Activated CD4-positive, alpha-beta memory T cell treated with anti-CD3 and anti-CD28 coated beads, Interleukin-2, amount 10 ng/mL, durations not matched to agents 7 days and 5 days (primary cell): ENCODE measurements at regions of chrX and their contacts with region 1.

Region 1: GRCh38 chrX:155056877-155057792 is 13.8 kb downstream of the CMC4 start:
- DNase-seq: peak; percentile 57
- H3K4me3 Mint-ChIP-seq: peak overlapping the region; percentile 59
- H3K27ac Mint-ChIP-seq: peak overlapping the region; percentile 67
- H3K4me1 Mint-ChIP-seq: peaks cover 35% of the 10 kb centered on the region
- H3K27me3 Mint-ChIP-seq: no peaks in the 10 kb centered on the region

Region 2: GRCh38 chrX:154918060-154918483 is 139.1 kb before region 1 on chrX:
- CTCF ChIA-PET with region 1: interaction called, 16 read pairs
- POLR2A ChIA-PET with region 1: no interaction called
- DNase-seq: peak; percentile 20
- H3K4me3 Mint-ChIP-seq: peak overlapping the region; percentile 25
- H3K27ac Mint-ChIP-seq: no peak overlapping the region
- H3K4me1 Mint-ChIP-seq: peaks cover 1% of the 10 kb centered on the region
- H3K27me3 Mint-ChIP-seq: peaks cover 14% of the 10 kb centered on the region

Region 3: DNA sequence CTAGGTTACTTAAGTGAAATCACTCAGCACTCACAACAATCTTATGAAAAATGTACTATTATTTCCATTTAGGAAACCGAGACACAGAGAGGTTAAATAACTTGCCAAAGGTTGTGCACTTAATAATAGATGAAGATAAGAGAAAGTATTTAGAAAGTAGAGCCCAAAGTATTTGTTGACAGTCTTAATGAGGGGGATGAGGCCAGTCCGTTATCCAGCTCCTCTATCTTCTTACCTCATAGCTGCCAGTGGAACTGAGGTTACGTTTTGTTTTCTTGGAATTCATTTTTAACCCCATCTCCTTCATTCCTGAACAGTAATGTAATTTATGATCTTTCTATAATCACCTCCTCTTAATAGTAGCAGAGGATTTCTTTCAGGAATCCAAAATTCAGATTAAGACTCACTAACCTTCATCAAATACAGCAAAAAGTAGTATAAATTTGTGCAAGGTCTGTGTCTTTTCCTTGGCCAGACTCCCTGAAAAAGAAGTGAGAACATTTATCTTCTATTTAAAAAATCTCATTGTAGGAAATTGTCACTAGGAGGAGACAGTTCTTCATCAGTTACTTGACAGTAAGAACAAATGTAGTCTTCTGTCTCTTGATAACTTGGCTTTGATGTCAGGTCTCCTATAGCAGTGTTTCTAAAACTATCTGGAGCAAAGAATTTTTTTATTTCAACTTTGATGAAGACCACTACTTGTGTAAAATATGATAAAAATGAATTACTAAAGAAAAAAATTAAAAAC is 70.1 kb before region 1 on chrX:
- CTCF ChIA-PET with region 1: interaction called, 23 read pairs
- POLR2A ChIA-PET with region 1: no interaction called
- DNase-seq: no peak
- H3K4me3 Mint-ChIP-seq: no peak overlapping the region
- H3K27ac Mint-ChIP-seq: no peak overlapping the region
- H3K4me1 Mint-ChIP-seq: no peaks in the 10 kb centered on the region
- H3K27me3 Mint-ChIP-seq: peaks cover 10% of the 10 kb centered on the region

Region 4: GRCh38 chrX:155070975-155071693 is 14.0 kb after region 1 on chrX and contains the starts of genes BRCC3, CMC4 and MTCP1:
- CTCF ChIA-PET with region 1: interaction called, 6 read pairs
- POLR2A ChIA-PET with region 1: interaction called, 13 read pairs
- DNase-seq: peak; percentile 83
- H3K4me3 Mint-ChIP-seq: peak within 1 kb of the TSS; percentile 90
- H3K27ac Mint-ChIP-seq: peak within 1 kb of the TSS; percentile 86
- H3K4me1 Mint-ChIP-seq: peaks cover 61% of the 10 kb centered on the region
- H3K27me3 Mint-ChIP-seq: no peaks in the 10 kb centered on the region
- total RNA-seq, gene BRCC3: 23.5 to 25.2 TPM
- total RNA-seq, gene CMC4: 4.8 to 5.9 TPM
- total RNA-seq, gene MTCP1: 20.2 TPM